ENCODE measurements at regions of chr11 and their contacts with region 1.

Region 1: GRCh38 chr11:126186708-126187529 is 24.5 kb downstream of the RPUSD4 start:
- DNase-seq: peak; percentile 87
- ATAC-seq: peak; percentile 82
- H3K4me3 ChIP-seq: peak overlapping the region; percentile 25 to 60 (median 37); a peak in 4 of 6 replicates
- H3K27ac ChIP-seq: peak overlapping the region; percentile 94
- H3K4me1 ChIP-seq: peaks cover 96% of the 10 kb centered on the region
- H3K27me3 ChIP-seq: no peaks in the 10 kb centered on the region
- CTCF ChIP-seq: peak; percentile 52
- EP300 ChIP-seq: peak in 1 of 2 experiments; percentile 74; a peak in 2 of 4 replicates
- POLR2A ChIP-seq: peak in 1 of 2 experiments; percentile 59; a peak in 2 of 4 replicates
- RAD21 ChIP-seq: peak; percentile 63

Region 2: DNA sequence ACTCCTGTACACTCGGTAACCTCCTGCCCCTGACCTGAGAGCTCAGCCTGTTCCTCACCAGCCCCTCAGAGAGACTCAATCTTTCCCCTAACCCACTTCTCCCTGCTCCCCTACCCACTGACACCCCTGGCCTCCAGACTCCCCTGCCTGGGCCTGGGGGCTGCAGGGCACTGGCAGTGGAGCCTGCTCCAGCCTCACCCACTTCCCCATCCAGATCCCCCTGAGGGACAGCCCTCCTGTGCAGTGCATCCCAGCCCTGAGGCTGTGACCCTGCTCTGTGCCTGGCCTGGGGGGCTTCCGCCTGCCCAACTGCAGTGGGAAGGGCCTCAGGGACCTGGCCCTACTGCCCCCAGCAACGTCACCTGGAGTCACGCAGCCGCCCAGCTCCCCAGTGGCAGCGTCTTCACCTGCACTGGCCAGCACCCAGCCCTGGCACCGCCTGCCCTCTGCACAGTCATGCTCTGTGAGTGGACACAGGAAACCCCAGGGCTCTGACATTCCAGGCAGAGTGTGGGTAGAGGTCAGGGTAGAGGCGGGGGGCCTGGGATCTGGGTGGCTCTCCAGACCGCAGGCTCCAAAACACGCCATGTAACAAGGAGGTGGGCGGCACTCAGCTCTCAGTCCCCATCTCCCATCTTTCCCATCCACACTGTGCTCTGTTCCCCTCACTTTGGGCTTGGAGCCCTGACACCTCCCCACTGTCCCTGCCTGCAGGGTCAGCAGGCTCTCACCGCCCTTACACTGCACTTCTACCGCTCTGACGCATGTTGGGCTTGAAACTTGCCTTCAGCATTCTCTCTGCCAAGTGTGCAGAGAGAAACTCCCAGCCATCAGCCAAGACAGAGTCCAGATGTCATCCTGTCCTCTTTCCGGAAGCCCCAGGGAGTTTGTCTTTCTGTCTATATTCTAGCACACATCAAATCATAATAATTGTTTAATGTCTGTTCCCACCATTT is 235.9 kb before region 1 on chr11:
- CTCF ChIA-PET with region 1: no interaction called
- POLR2A ChIA-PET with region 1: no interaction called
- in situ Hi-C with region 1: no loop called
- intact Hi-C with region 1: no loop called
- DNase-seq: no peak
- ATAC-seq: peak; percentile 17
- H3K4me3 ChIP-seq: no peak overlapping the region
- H3K27ac ChIP-seq: no peak overlapping the region
- H3K4me1 ChIP-seq: peaks cover 28% of the 10 kb centered on the region
- H3K27me3 ChIP-seq: no peaks in the 10 kb centered on the region; a peak in 1 of 5 replicates
- CTCF ChIP-seq: no peak
- EP300 ChIP-seq: no peak
- POLR2A ChIP-seq: no peak
- RAD21 ChIP-seq: no peak

Region 3: DNA sequence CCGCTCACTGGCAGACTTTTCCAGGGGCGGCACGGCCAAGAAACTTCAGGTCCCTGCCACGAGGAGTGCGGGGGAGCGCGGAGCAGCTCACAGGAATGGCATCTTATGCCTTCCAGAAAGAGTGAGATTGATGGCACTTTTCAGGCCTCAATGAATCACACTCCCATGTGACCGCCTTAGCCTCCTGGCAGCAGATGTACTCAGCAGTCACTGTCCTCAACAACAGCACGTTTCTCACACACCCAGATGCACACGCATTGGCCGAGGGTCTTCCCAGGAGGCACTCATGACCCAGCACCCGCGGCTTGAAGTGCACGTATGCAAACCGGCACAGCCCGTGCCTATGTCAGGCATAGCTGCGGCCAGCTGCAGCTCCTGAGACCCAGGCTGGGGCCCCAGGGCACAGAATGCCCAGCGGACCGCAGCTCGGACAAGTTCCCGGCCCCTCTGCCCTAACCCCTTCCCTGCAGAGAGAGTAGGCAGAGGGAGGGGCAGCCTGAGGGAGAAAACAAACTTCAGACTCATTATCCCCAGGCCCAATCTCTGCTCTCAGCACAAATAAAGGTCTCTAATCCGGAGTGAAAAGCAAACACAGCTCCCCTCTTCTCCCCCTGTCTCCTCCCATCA is 23.7 kb before region 1 on chr11:
- CTCF ChIA-PET with region 1: no interaction called
- POLR2A ChIA-PET with region 1: interaction called, 35 read pairs
- in situ Hi-C with region 1: no loop called
- intact Hi-C with region 1: loop called (anchors 2 kb)
- DNase-seq: peak; percentile 68
- ATAC-seq: peak; percentile 46
- H3K4me3 ChIP-seq: peak overlapping the region in 2 of 3 experiments; percentile 39 to 48; a peak in 4 of 6 replicates
- H3K27ac ChIP-seq: peak overlapping the region; percentile 58
- H3K4me1 ChIP-seq: peaks cover 95% of the 10 kb centered on the region
- H3K27me3 ChIP-seq: peaks cover 0 to 1% of the 10 kb centered on the region in 2 experiments; a peak in 1 of 5 replicates
- CTCF ChIP-seq: no peak
- EP300 ChIP-seq: peak in 1 of 2 experiments; percentile 76; a peak in 2 of 4 replicates
- POLR2A ChIP-seq: no peak
- RAD21 ChIP-seq: no peak

Measured in HepG2 (cell line).